ENCODE measurements at regions of chr10 and their contacts with region 1.

Region 1: GRCh38 chr10:28676968-28677887 is at the start of gene BAMBI:
- DNase-seq: peak; percentile 89 to 93
- ATAC-seq: peak; percentile 94 to 98 (median 98)
- H3K4me3 ChIP-seq: peak within 1 kb of the TSS; percentile 72 to 94 (median 82)
- H3K27ac ChIP-seq: peak within 1 kb of the TSS; percentile 68 to 89 (median 80)
- H3K4me1 ChIP-seq: peaks cover 0 to 54% (median 33%) of the 10 kb centered on the region in 9 donors
- H3K27me3 ChIP-seq: peaks cover 0 to 88% (median 12%) of the 10 kb centered on the region in 7 donors
- CTCF ChIP-seq: peak; percentile 51 to 81 (median 68)
- total RNA-seq, gene BAMBI: 11.0 to 29.6 (median 21.3) TPM

Region 2: DNA sequence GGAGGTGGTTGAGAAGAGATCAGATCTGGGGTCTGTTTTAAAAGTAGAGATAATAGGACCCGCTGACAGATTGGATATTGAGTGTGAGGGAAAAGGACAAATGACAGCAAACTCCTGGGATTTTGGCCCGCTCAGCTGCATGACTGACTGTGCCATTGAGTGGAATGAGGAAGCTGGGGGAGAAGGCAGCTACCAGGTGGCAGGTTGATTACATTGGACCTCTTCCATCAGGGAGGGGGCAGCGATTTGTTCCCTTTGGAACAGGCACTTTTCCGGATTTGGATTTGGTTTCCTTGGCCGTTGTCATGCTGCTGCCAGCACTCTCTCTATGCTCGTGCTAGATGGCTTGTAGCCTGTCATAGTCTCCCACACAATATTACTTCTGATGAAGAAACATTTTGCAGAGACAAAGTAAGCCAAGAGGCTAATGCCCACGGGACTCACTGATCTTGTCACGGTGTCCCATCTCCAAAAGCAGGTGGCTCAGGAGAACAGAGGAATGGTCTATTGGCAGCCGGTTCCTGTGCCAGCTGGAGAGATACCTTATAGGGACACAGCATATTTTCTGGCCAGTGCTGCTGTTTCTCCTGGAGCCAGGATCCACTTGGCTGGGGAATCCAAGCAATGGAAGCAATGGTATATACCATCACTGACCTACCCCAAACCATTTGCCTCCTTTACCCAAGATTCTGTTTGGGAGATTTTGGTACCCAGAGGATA is 213.4 kb before region 1 on chr10:
- intact Hi-C with region 1: no loop called
- DNase-seq: no peak
- ATAC-seq: no peak
- H3K4me3 ChIP-seq: no peak overlapping the region
- H3K27ac ChIP-seq: no peak overlapping the region
- H3K4me1 ChIP-seq: peaks cover 0 to 7% (median 0%) of the 10 kb centered on the region in 9 donors
- H3K27me3 ChIP-seq: peaks cover 0 to under 1% (median 0%) of the 10 kb centered on the region in 7 donors
- CTCF ChIP-seq: no peak

Region 3: DNA sequence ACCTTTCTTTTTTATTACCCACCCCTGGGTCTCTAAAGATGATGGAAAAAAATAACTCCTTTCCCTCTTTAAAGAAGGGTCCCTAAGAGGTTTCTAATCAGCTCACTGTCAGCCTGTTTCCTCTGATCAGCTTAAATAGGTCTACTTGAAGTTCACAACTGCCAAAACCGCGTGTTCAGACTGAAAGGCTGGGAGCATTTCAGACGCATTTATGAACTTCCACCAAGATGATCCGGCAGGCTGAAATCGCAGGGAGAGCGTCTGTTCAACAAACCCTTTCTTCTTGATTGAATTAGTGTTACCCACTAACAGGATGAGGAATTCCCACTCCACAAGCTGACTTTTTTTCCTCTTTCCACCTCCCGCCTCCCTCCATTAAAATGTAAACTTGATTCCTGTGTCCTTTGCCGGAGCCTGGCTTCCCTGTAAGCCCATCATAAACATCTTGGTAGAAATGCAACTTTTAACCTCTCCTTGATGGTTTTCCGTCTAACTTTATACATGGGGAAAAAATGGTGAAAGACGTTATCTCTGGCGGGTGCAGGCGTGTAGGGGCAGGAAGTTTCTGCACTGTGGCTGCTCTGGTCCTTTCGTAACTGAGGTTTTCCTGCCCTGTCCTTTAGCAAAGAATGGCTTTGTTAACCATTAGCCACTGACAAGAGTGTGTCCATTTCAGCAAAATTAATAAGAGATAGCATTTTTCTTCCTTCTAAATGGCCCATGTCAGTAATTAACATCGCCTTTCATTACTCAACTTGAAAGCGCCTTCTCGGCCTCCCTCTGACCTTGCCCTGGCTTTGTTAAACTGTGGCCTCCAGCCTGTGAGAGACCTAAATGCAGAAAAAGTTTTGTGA is 130.8 kb after region 1 on chr10:
- intact Hi-C with region 1: loop called in 4 of 10 experiments (anchors 10 kb)
- DNase-seq: no peak
- ATAC-seq: peak; percentile 22 to 56 (median 44)
- H3K4me3 ChIP-seq: peak overlapping the region in 4 of 10 donors; percentile 3 to 30 (median 24)
- H3K27ac ChIP-seq: peak overlapping the region in 9 of 10 donors; percentile 67 to 87 (median 84)
- H3K4me1 ChIP-seq: peaks cover 3 to 31% (median 12%) of the 10 kb centered on the region in 9 donors
- H3K27me3 ChIP-seq: no peaks in the 10 kb centered on the region
- CTCF ChIP-seq: no peak

Region 4: GRCh38 chr10:28839600-28840007 is 162.4 kb after region 1 on chr10:
- intact Hi-C with region 1: loop called in 2 of 10 experiments (anchors 5 to 10 kb)
- DNase-seq: peak in 1 of 2 donors; percentile 59
- ATAC-seq: peak; percentile 48 to 96 (median 92)
- H3K4me3 ChIP-seq: no peak overlapping the region
- H3K27ac ChIP-seq: peak overlapping the region; percentile 39 to 78 (median 56)
- H3K4me1 ChIP-seq: peaks cover 0 to 46% (median 18%) of the 10 kb centered on the region in 9 donors
- H3K27me3 ChIP-seq: no peaks in the 10 kb centered on the region
- CTCF ChIP-seq: no peak

Region 5: DNA sequence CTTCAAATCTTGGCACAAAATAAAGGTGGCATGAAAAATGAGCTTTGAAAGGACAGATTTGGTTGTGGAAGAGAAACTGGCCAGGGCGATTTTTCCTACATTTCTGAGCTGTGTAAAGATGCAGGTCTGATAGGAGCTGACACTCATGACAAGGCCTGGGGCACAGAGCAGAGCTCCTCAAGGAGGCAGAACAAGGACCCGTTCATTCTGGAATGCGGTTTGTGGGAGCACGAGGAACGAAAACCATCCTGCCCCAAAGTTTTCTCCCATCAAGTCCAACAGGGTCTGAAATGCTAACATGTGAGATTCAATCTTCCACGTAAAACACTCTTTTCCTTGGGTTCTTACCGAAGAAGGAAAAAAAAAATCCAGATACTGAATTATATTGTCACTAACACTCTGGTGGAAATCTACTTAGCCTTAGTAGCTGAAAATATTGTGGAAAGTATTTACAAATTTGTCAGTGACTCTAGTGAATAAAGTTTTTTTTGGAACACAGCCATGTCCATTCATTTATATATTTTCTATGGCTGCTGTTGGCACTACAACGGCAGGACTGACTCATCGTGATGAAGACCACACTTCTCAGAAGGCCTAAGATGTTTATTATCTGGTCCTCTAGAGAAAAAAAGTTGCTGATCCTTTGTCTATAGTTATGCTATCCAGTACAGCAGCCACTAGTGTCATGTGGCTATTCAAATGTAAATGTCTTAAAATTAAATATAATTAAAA is 215.8 kb after region 1 on chr10:
- intact Hi-C with region 1: loop called in 4 of 10 experiments (anchors 5 to 10 kb)
- DNase-seq: no peak
- ATAC-seq: no peak
- H3K4me3 ChIP-seq: no peak overlapping the region
- H3K27ac ChIP-seq: no peak overlapping the region
- H3K4me1 ChIP-seq: peaks cover 0 to 10% (median 4%) of the 10 kb centered on the region in 9 donors
- H3K27me3 ChIP-seq: no peaks in the 10 kb centered on the region
- CTCF ChIP-seq: no peak

Region 6: DNA sequence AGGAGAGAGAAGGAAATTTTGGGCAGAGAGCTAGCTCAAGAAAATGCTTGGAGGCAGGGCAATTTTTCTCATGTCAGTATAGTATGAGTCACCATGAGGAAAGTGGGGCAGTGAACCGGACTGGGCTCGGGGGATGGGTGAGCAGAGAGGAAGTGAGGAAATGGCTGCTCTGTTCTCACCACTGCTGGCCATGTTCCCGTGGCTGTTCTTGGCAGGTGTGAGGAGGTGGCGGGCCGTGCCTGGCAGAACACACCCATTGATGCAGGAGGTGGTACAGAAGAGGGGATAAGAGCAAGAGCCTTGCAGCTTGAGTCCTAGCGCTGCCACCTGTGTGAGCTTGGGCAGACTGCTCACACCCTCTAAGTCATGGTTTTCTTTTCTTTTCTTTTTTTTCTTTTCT is 307.2 kb after region 1 on chr10:
- intact Hi-C with region 1: loop called in 2 of 10 experiments (anchors 1 to 2 kb)
- DNase-seq: peak; percentile 84 to 86
- ATAC-seq: peak; percentile 86 to 98 (median 96)
- H3K4me3 ChIP-seq: no peak overlapping the region
- H3K27ac ChIP-seq: peak overlapping the region in 2 of 10 donors; percentile 32 to 39
- H3K4me1 ChIP-seq: peaks cover 0 to 25% (median 13%) of the 10 kb centered on the region in 9 donors
- H3K27me3 ChIP-seq: no peaks in the 10 kb centered on the region
- CTCF ChIP-seq: no peak

Region 7: GRCh38 chr10:28991326-28992270 is 314.4 kb after region 1 on chr10:
- intact Hi-C with region 1: loop called in 8 of 10 experiments (anchors 1 to 5 kb)
- DNase-seq: peak; percentile 32 to 35
- ATAC-seq: peak; percentile 57 to 97 (median 86)
- H3K4me3 ChIP-seq: no peak overlapping the region
- H3K27ac ChIP-seq: peak overlapping the region in 4 of 10 donors; percentile 39 to 68 (median 44)
- H3K4me1 ChIP-seq: peaks cover 0 to 9% (median 0%) of the 10 kb centered on the region in 9 donors
- H3K27me3 ChIP-seq: no peaks in the 10 kb centered on the region
- CTCF ChIP-seq: peak; percentile 30 to 80 (median 68)

Region 8: GRCh38 chr10:29131952-29132820 is 455.0 kb after region 1 on chr10:
- intact Hi-C with region 1: loop called in 1 of 10 experiments (anchors 5 kb)
- DNase-seq: peak in 1 of 2 donors; percentile 49
- ATAC-seq: peak; percentile 51 to 88 (median 69)
- H3K4me3 ChIP-seq: peak overlapping the region in 1 of 10 donors; percentile 30
- H3K27ac ChIP-seq: peak overlapping the region in 5 of 10 donors; percentile 2 to 39 (median 20)
- H3K4me1 ChIP-seq: peaks cover 0 to 18% (median 14%) of the 10 kb centered on the region in 9 donors
- H3K27me3 ChIP-seq: no peaks in the 10 kb centered on the region
- CTCF ChIP-seq: no peak

Measured in heart right ventricle (tissue), 16 donors.